Gastrocnemius medialis (tissue), 4 donors: ENCODE measurements at regions of chr13 and their contacts with region 1.

Region 1: GRCh38 chr13:102845630-102846260 is at the start of gene ERCC5:
- DNase-seq: peak; percentile 85 to 91
- ATAC-seq: peak; percentile 90 to 92
- H3K4me3 ChIP-seq: peak within 1 kb of the TSS; percentile 75 to 94 (median 92)
- H3K27ac ChIP-seq: peak within 1 kb of the TSS; percentile 92 to 98 (median 96)
- H3K4me1 ChIP-seq: peaks cover 19 to 21% of the 10 kb centered on the region in 2 donors
- H3K27me3 ChIP-seq: no peaks in the 10 kb centered on the region
- CTCF ChIP-seq: peak in 1 of 5 experiments; percentile 42
- POLR2A ChIP-seq: peak; percentile 63 to 70
- total RNA-seq, gene ERCC5: 43.5 to 77.7 (median 46.8) TPM

Region 2: DNA sequence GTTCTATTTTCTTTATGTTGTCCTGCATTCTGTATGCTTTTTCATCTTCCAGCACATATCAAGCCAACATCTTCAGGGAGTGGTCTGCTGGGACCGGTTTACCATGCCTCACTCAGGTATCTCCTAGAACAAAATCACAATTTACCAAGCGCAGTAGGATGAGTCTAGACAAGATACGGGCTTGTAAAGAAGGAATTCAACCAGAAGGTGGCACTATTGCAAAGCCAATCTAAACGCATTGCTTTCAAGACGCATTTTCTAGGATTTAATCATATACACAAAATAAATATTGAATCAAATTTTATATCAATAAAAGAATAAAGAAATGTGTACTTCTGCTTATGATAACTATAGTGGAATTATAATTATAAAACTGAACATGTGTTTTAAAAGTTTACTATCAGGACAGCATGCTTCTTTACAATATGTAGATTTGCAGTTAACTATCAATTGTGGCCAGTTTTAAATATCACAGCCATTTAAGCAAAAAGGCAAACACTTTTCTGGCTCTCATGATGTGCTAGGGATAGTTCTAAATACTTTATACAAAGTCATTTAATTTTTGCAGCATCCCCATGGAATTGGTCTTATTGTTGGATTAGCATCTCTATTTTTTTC is 265.1 kb before region 1 on chr13:
- in situ Hi-C with region 1: loop called in 3 of 4 experiments (anchors 5 to 10 kb)
- intact Hi-C with region 1: no loop called
- DNase-seq: no peak
- ATAC-seq: peak; percentile 43 to 65
- H3K4me3 ChIP-seq: no peak overlapping the region
- H3K27ac ChIP-seq: no peak overlapping the region
- H3K4me1 ChIP-seq: peaks cover 8 to 11% of the 10 kb centered on the region in 2 donors
- H3K27me3 ChIP-seq: no peaks in the 10 kb centered on the region
- CTCF ChIP-seq: peak; percentile 55 to 82 (median 65)
- POLR2A ChIP-seq: no peak

Region 3: DNA sequence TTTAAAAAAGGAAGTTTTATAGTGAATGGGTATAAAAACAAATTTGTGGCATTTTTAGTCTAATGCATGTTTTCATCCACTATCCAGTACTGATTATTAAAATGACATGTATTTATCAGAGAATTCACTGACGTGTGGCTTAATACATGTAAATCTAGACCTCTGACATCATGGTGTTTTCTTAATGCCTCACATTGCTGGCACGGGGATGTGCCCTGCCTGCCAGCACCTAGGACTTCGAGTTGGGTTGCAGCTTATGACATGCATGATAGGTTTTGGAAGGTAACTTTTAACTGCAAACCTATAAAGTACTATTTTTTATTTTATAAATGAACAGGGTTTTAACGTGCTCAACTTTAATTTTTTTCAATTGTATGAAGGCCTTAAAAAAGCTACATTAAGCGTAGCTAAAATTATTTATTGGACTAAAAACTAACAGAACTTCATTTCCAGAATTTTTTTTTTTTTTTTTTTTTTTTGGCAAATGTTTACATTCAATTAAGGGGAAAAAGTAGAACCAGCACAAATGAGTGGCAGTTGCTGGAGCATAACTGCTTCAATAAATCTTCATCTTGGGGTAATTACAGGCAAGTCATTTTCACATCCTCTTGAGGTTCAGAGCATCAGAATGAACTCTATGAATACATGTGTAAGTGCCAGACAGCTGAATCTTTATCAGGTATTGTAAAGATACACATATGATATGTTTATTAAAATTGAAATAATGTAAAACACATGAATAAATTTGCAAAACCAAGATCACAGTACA is 167.2 kb before region 1 on chr13:
- in situ Hi-C with region 1: no loop called
- intact Hi-C with region 1: loop called (anchors 10 kb)
- DNase-seq: peak in 1 of 2 donors; percentile 64
- ATAC-seq: peak; percentile 60 to 62
- H3K4me3 ChIP-seq: no peak overlapping the region
- H3K27ac ChIP-seq: peak overlapping the region; percentile 67 to 80 (median 68)
- H3K4me1 ChIP-seq: peaks cover 32 to 37% of the 10 kb centered on the region in 2 donors
- H3K27me3 ChIP-seq: no peaks in the 10 kb centered on the region
- CTCF ChIP-seq: no peak
- POLR2A ChIP-seq: no peak

Region 4: DNA sequence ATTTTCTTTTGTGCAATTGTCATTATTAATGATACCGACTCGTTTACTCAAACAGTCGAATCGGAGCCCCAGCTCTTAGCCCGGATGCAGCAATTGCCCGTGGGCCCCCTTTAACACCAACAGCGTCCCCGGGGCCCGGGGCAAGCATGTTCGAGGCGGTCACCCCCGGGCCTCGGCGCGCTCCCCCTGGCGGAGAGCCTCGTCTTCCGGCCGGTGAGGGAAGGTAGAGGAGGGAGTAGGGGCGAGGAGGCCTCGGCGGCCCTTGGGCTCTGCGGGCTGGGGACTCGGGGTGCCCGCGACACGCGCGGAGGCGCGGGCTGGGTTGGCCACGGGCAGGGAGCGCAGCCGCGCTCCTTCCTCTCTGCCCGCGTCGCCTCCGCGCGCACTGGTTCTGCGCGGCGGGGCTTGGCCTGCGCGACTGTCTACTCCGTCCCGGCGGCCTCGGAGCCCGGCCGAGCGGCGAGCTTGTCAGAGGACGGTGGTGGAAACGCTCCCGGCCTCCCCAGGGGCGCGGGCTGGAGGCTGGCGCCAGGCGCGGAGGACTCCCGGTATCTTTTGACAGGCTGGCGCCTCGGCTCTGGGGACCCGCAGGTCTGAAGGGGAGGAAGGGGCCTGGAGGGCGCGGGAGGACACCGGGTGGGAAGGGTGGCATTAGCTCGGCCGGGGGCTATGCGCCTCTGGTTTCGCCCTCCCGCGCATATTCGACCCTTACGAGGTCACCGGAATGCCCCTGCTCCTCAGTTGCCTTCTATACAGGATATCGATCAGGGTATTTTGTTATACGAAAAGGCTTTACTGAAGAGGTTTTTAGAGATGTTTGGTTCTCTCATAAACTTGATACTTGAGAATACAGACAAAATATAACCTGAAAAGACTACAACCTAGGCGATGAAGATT is 45.4 kb before region 1 on chr13:
- in situ Hi-C with region 1: no loop called
- intact Hi-C with region 1: loop called (anchors 1 kb)
- DNase-seq: peak; percentile 57 to 77
- ATAC-seq: peak; percentile 75 to 83
- H3K4me3 ChIP-seq: peak overlapping the region; percentile 68 to 87 (median 78)
- H3K27ac ChIP-seq: peak overlapping the region; percentile 75 to 91 (median 89)
- H3K4me1 ChIP-seq: peaks cover 25 to 29% of the 10 kb centered on the region in 2 donors
- H3K27me3 ChIP-seq: no peaks in the 10 kb centered on the region
- CTCF ChIP-seq: peak; percentile 63 to 82 (median 76)
- POLR2A ChIP-seq: no peak